SK-N-SH (cell line): ENCODE measurements at regions of chr7 and their contacts with region 1.

Region 1: GRCh38 chr7:19747740-19748339 is 25.6 kb downstream of the TMEM196 start:
- DNase-seq: peak; percentile 47
- H3K4me3 ChIP-seq: no peak overlapping the region
- H3K27ac ChIP-seq: no peak overlapping the region
- H3K4me1 ChIP-seq: no peaks in the 10 kb centered on the region
- H3K27me3 ChIP-seq: no peaks in the 10 kb centered on the region; the same call in 1 of the 2 replicates
- CTCF ChIP-seq: peak; percentile 86
- EP300 ChIP-seq: no peak
- RAD21 ChIP-seq: peak; percentile 78

Region 2: DNA sequence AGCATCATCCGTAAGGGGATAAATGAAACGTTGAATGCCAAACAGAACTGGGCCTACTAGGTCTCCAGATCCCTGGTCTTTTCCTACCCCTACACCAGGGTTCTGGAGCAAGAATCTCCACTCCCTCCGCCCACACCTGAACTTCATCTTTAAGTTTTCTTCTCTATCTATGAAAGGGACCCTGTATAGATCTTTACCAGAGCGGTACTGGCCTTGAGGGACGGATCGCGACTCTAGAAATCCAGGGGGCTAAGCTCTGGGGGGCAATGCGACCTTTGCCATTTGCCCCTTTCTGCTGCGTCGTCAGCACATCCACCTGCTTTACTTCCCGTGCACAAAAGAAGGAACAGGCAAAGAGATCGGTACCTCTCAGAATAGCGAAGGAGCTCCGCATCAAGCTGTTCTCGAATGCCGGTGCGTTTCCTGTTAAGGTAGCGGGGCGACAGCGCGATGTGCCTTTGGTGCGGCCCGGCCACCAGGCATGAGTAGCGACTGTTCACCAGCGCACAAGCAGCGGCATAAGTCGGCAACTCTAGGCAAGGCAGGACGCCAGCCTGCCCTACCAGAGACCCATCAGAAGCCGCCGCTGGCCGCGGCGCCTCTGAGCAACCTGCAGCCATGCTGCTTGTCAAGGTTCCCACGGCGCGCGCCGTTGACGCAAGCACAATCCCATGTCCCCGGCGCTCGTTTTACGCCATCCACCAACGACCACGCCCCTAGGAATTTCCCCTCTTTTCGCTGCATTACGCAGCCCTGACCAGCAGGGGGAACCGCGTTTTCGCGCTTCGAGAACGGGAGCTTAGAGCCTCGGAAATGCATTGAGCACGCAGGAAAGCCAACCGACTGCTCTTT is 39.2 kb before region 1 on chr7 and contains the start of gene POLR1F:
- CTCF ChIA-PET with region 1: interaction called, 23 read pairs
- POLR2A ChIA-PET with region 1: no interaction called
- DNase-seq: peak; percentile 93
- H3K4me3 ChIP-seq: peak within 1 kb of the TSS; percentile 82 to 100
- H3K27ac ChIP-seq: peak within 1 kb of the TSS; percentile 38 to 47; a peak in 3 of 4 replicates
- H3K4me1 ChIP-seq: peaks cover 0 to 16% of the 10 kb centered on the region in 2 experiments; a peak in 2 of 4 replicates
- H3K27me3 ChIP-seq: no peaks in the 10 kb centered on the region
- CTCF ChIP-seq: peak; percentile 97
- EP300 ChIP-seq: no peak
- RAD21 ChIP-seq: peak; percentile 69
- polyA plus RNA-seq, gene POLR1F: 5.1 and 8.1 TPM in 2 replicates

Region 3: DNA sequence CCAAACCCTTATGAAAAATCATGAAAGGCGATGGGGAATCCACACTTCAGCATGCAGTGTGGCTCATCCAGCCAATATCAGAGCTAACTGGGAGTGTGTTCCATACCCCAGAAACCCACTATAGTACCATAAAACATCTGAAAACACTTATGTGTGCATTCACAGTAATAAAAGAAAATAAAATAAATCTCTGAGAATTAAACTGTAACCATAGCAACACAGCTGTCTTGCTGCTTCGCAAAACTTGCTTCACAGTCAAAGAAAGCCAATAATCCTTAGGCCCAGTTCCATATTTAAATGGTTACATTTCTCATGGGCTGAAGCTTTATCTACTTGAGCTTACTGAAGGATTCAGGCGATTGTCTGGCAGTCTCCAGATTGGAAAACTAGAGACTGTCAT is 19.1 kb before region 1 on chr7:
- CTCF ChIA-PET with region 1: interaction called, 14 read pairs
- POLR2A ChIA-PET with region 1: no interaction called
- DNase-seq: no peak
- H3K4me3 ChIP-seq: no peak overlapping the region
- H3K27ac ChIP-seq: no peak overlapping the region
- H3K4me1 ChIP-seq: no peaks in the 10 kb centered on the region
- H3K27me3 ChIP-seq: peaks cover 4% of the 10 kb centered on the region; the same call in 1 of the 2 replicates
- CTCF ChIP-seq: no peak
- EP300 ChIP-seq: no peak
- RAD21 ChIP-seq: no peak

Region 4: DNA sequence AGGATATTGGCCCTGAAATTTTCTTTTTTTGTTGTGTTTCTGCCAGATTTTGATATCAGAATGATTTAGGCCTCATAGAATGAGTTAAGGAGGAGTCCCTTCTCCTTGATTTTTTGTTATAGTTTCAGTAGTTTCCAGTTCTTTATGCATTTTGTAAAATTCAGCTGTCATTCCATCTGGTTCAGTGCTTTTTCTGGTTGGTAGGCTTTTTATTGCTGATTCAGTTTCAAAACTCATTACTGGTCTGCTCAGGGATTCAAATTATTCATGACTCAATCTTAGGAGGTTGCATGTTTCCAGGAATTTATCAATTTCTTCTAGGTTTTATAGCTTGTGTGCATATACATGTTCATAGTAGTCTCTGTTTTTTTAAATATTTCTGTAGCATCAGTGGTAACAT is 35.7 kb after region 1 on chr7:
- CTCF ChIA-PET with region 1: interaction called, 10 read pairs
- POLR2A ChIA-PET with region 1: no interaction called
- DNase-seq: no peak
- H3K4me3 ChIP-seq: no peak overlapping the region
- H3K27ac ChIP-seq: no peak overlapping the region
- H3K4me1 ChIP-seq: no peaks in the 10 kb centered on the region
- H3K27me3 ChIP-seq: no peaks in the 10 kb centered on the region
- CTCF ChIP-seq: no peak
- EP300 ChIP-seq: no peak
- RAD21 ChIP-seq: no peak

Region 5: GRCh38 chr7:20591058-20591457 is 843.2 kb after region 1 on chr7:
- CTCF ChIA-PET with region 1: interaction called, 31 read pairs
- POLR2A ChIA-PET with region 1: no interaction called
- DNase-seq: no peak
- H3K4me3 ChIP-seq: no peak overlapping the region
- H3K27ac ChIP-seq: no peak overlapping the region
- H3K4me1 ChIP-seq: peaks cover 0 to 2% of the 10 kb centered on the region in 2 experiments; a peak in 1 of 4 replicates
- H3K27me3 ChIP-seq: no peaks in the 10 kb centered on the region
- CTCF ChIP-seq: no peak
- EP300 ChIP-seq: no peak
- RAD21 ChIP-seq: no peak